ENCODE measurements at regions of chr20 and their contacts with region 1.

Region 1: GRCh38 chr20:11626551-11626950 is 291.1 kb upstream of the BTBD3 start:
- DNase-seq: no peak
- ATAC-seq: no peak
- H3K4me3 ChIP-seq: no peak overlapping the region
- H3K4me3 Mint-ChIP-seq: no peak overlapping the region
- H3K27ac ChIP-seq: no peak overlapping the region
- H3K27ac Mint-ChIP-seq: no peak overlapping the region
- H3K4me1 ChIP-seq: no peaks in the 10 kb centered on the region
- H3K4me1 Mint-ChIP-seq: no peaks in the 10 kb centered on the region
- H3K27me3 ChIP-seq: no peaks in the 10 kb centered on the region
- H3K27me3 Mint-ChIP-seq: no peaks in the 10 kb centered on the region
- CTCF ChIP-seq: no peak

Region 2: DNA sequence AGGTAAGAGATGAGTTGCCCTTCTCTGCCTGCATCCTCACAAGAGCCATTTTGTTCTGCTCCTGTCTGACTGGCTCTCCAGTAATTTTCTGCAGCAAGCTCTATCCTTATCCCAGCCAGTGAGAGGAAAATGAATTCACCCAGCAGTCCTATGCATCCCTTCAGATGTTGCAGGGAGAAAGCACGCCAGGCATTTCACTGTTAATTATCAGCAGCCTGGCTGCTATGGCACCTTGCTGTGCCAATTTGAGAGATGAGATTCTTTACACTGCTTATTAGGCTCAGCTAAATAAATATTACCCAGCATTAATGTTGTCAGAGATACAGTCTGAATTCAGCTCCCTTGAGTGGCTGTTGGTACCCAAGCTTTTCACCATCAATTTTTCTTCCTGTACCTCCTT is 1469.0 kb before region 1 on chr20:
- CTCF ChIA-PET with region 1: no interaction called
- POLR2A ChIA-PET with region 1: no interaction called
- intact Hi-C with region 1: loop called in 1 of 2 experiments (anchors 5 kb)
- DNase-seq: no peak
- ATAC-seq: no peak
- H3K4me3 ChIP-seq: no peak overlapping the region
- H3K4me3 Mint-ChIP-seq: no peak overlapping the region
- H3K27ac ChIP-seq: no peak overlapping the region
- H3K27ac Mint-ChIP-seq: no peak overlapping the region
- H3K4me1 ChIP-seq: no peaks in the 10 kb centered on the region
- H3K4me1 Mint-ChIP-seq: no peaks in the 10 kb centered on the region
- H3K27me3 ChIP-seq: peaks cover 0 to 3% of the 10 kb centered on the region in 2 experiments
- H3K27me3 Mint-ChIP-seq: peaks cover 9% of the 10 kb centered on the region
- CTCF ChIP-seq: no peak

Region 3: DNA sequence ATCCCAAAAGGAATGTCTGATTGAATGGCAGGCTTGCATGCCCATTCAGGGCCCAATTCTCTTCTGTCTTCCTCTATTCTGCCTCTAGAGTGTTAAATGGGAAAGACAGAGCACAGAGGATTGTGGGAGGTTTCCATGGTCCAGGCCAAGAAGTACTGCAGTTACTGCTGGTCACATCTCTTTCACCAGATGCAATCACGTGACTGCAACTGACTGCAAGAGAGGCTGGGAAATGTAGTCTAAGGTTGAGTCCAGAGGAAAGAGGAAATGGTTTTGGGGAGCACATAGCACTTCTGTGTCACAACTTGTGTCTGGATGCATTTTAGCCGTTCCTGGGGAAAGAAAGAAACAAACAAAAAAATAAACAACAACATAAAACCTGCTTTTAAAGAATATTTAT is 45.3 kb before region 1 on chr20:
- CTCF ChIA-PET with region 1: no interaction called
- POLR2A ChIA-PET with region 1: no interaction called
- intact Hi-C with region 1: loop called in 1 of 2 experiments (anchors 5 kb)
- DNase-seq: peak in 2 of 14 experiments; percentile 1 to 4
- ATAC-seq: no peak
- H3K4me3 ChIP-seq: no peak overlapping the region
- H3K4me3 Mint-ChIP-seq: no peak overlapping the region
- H3K27ac ChIP-seq: no peak overlapping the region
- H3K27ac Mint-ChIP-seq: no peak overlapping the region
- H3K4me1 ChIP-seq: no peaks in the 10 kb centered on the region
- H3K4me1 Mint-ChIP-seq: no peaks in the 10 kb centered on the region
- H3K27me3 ChIP-seq: no peaks in the 10 kb centered on the region
- H3K27me3 Mint-ChIP-seq: no peaks in the 10 kb centered on the region
- CTCF ChIP-seq: no peak